Panc1 (cell line): ENCODE measurements at regions of chr12 and their contacts with region 1.

Region 1: GRCh38 chr12:34218165-34219045 is 196.1 kb downstream of the ALG10 start:
- DNase-seq: peak; percentile 81
- ATAC-seq: peak; percentile 90
- H3K4me3 ChIP-seq: peak overlapping the region; percentile 44 to 49
- H3K27ac ChIP-seq: no peak overlapping the region
- H3K4me1 ChIP-seq: no peaks in the 10 kb centered on the region
- H3K27me3 ChIP-seq: no peaks in the 10 kb centered on the region
- CTCF ChIP-seq: peak; percentile 96

Region 2: GRCh38 chr12:32926963-32927362 is 1291.4 kb before region 1 on chr12:
- CTCF ChIA-PET with region 1: no interaction called
- POLR2A ChIA-PET with region 1: no interaction called
- in situ Hi-C with region 1: no loop called
- intact Hi-C with region 1: no loop called
- DNase-seq: no peak
- ATAC-seq: no peak
- H3K4me3 ChIP-seq: no peak overlapping the region
- H3K27ac ChIP-seq: no peak overlapping the region
- H3K4me1 ChIP-seq: no peaks in the 10 kb centered on the region
- H3K27me3 ChIP-seq: no peaks in the 10 kb centered on the region
- CTCF ChIP-seq: no peak

Region 3: GRCh38 chr12:34033628-34034282 is 184.7 kb before region 1 on chr12:
- CTCF ChIA-PET with region 1: interaction called, 8 read pairs
- POLR2A ChIA-PET with region 1: no interaction called
- in situ Hi-C with region 1: no loop called
- intact Hi-C with region 1: loop called (anchors 5 kb)
- DNase-seq: no peak
- ATAC-seq: no peak
- H3K4me3 ChIP-seq: no peak overlapping the region
- H3K27ac ChIP-seq: no peak overlapping the region
- H3K4me1 ChIP-seq: no peaks in the 10 kb centered on the region
- H3K27me3 ChIP-seq: no peaks in the 10 kb centered on the region
- CTCF ChIP-seq: peak; percentile 28; the same call in 1 of the 2 replicates

Region 4: GRCh38 chr12:34126239-34126641 is 92.2 kb before region 1 on chr12:
- CTCF ChIA-PET with region 1: interaction called, 6 read pairs
- POLR2A ChIA-PET with region 1: no interaction called
- in situ Hi-C with region 1: no loop called
- intact Hi-C with region 1: loop called (anchors 1 kb)
- DNase-seq: no peak
- ATAC-seq: peak; percentile 66; the same call in 1 of the 2 replicates
- H3K4me3 ChIP-seq: peak overlapping the region; percentile 10 to 46
- H3K27ac ChIP-seq: peak overlapping the region; percentile 1; the same call in 1 of the 2 replicates
- H3K4me1 ChIP-seq: no peaks in the 10 kb centered on the region
- H3K27me3 ChIP-seq: no peaks in the 10 kb centered on the region
- CTCF ChIP-seq: no peak

Region 5: DNA sequence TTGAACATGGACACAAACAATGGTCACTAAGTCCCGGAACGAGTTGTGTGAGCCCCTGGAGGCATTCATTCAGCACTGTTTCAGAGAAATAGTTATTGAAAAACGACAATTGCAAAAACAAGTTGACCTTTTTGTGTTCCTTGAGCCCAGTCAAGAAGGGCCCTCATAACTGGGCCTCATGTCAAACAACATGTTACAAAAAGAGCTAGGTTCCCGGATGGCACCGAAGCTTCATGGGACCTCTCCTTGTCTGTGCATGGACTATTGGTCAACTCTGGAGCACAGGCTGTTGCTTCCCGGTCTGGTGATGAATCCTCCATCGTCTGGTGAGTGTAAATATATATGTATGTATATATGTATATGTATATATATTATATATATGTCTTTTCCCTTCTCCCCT is 19.5 kb before region 1 on chr12:
- CTCF ChIA-PET with region 1: no interaction called
- POLR2A ChIA-PET with region 1: no interaction called
- in situ Hi-C with region 1: no loop called
- intact Hi-C with region 1: no loop called
- DNase-seq: no peak
- ATAC-seq: no peak
- H3K4me3 ChIP-seq: no peak overlapping the region
- H3K27ac ChIP-seq: no peak overlapping the region
- H3K4me1 ChIP-seq: no peaks in the 10 kb centered on the region
- H3K27me3 ChIP-seq: peaks cover 3% of the 10 kb centered on the region
- CTCF ChIP-seq: no peak

Region 6: DNA sequence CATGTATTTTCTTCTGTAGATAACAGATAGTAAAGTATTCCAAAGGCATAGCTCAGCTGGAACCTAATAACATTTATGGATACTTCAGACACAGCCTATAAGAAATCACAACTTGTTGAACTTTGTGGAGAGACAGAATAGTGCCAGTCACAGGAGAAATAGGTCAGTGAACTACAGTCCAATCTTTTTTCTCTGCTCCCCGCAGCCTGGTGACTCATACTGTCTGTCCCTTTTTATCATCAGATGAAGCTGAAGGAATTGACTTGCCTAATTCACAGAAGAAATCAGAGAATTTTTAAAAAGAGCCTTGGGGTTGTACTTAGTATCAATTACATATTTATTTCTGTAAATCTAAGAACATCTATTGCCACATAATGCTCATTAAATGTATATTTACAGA is 26.2 kb after region 1 on chr12:
- CTCF ChIA-PET with region 1: no interaction called
- POLR2A ChIA-PET with region 1: no interaction called
- in situ Hi-C with region 1: no loop called
- intact Hi-C with region 1: no loop called
- DNase-seq: no peak
- ATAC-seq: no peak
- H3K4me3 ChIP-seq: no peak overlapping the region
- H3K27ac ChIP-seq: no peak overlapping the region
- H3K4me1 ChIP-seq: no peaks in the 10 kb centered on the region
- H3K27me3 ChIP-seq: peaks cover 6% of the 10 kb centered on the region; the same call in 1 of the 2 replicates
- CTCF ChIP-seq: no peak

Region 7: DNA sequence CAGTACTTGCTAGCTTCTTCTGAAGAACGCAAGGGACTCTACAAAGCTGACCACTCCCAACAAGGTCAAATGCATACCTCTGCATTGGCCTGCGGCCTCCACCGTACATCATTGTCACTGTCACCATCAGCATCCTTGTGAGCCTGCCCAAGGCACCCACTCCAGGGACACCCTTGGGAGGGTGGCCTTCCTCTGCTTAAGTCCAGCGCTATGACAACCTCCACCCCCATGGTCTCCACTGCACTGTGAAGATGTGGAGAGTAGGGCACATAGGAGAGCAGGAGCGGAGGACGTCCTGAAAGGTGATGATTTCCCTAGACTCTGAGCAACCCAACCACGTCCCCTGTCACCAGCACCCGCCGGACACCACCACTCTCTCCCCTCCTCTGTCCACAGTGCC is 56.7 kb after region 1 on chr12:
- CTCF ChIA-PET with region 1: no interaction called
- POLR2A ChIA-PET with region 1: no interaction called
- in situ Hi-C with region 1: no loop called
- intact Hi-C with region 1: no loop called
- DNase-seq: no peak
- ATAC-seq: no peak
- H3K4me3 ChIP-seq: no peak overlapping the region
- H3K27ac ChIP-seq: no peak overlapping the region
- H3K4me1 ChIP-seq: no peaks in the 10 kb centered on the region
- H3K27me3 ChIP-seq: no peaks in the 10 kb centered on the region; the same call in 1 of the 2 replicates
- CTCF ChIP-seq: no peak